ENCODE measurements at regions of chr5 and their contacts with region 1.

Region 1: GRCh38 chr5:127492854-127493738 is 24.3 kb upstream of the PRRC1 start:
- DNase-seq: peak; percentile 26
- ATAC-seq: peak; percentile 75
- H3K4me3 ChIP-seq: no peak overlapping the region
- H3K27ac ChIP-seq: no peak overlapping the region
- H3K4me1 ChIP-seq: no peaks in the 10 kb centered on the region
- H3K27me3 ChIP-seq: no peaks in the 10 kb centered on the region
- CTCF ChIP-seq: peak; percentile 57 to 66 (median 64)
- EP300 ChIP-seq: no peak
- POLR2A ChIP-seq: no peak
- RAD21 ChIP-seq: peak; percentile 22; the same call in 1 of the 2 replicates

Region 2: DNA sequence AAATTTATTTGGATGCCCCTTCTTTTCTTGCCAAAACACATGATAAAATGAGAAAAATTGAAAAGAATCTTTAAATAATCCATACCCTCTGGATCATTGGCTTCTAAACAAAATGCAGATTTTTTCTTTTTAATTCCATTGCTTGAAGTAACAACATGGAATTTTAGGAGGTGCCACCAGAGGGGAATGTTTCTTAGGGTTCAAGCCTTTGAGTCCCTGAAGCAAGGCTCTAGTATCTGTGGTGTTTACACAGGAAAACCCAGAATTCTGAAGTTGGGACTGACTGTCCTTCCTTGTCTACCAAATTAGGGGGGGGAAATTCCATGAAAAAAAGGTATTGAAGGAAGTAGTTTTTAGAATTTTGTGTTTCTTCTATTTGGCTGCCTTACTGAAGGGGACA is 646.8 kb before region 1 on chr5:
- CTCF ChIA-PET with region 1: interaction called, 3 read pairs
- POLR2A ChIA-PET with region 1: no interaction called
- RAD21 ChIA-PET with region 1: no interaction called
- SMC1A ChIA-PET with region 1: no interaction called
- in situ Hi-C with region 1: no loop called
- intact Hi-C with region 1: loop called (anchors 10 kb)
- DNase-seq: no peak
- ATAC-seq: no peak
- H3K4me3 ChIP-seq: no peak overlapping the region
- H3K27ac ChIP-seq: no peak overlapping the region
- H3K4me1 ChIP-seq: no peaks in the 10 kb centered on the region; the same call in 1 of the 2 replicates
- H3K27me3 ChIP-seq: no peaks in the 10 kb centered on the region
- CTCF ChIP-seq: peak in 1 of 3 experiments; percentile 18; a peak in 1 of 6 replicates
- EP300 ChIP-seq: no peak
- POLR2A ChIP-seq: no peak
- RAD21 ChIP-seq: peak; percentile 19; the same call in 1 of the 2 replicates

Region 3: GRCh38 chr5:127290019-127290945 is 202.8 kb before region 1 on chr5 and contains the start of gene MEGF10:
- CTCF ChIA-PET with region 1: interaction called, 6 read pairs
- POLR2A ChIA-PET with region 1: no interaction called
- RAD21 ChIA-PET with region 1: no interaction called
- SMC1A ChIA-PET with region 1: no interaction called
- in situ Hi-C with region 1: no loop called
- intact Hi-C with region 1: loop called (anchors 1 kb)
- DNase-seq: no peak
- ATAC-seq: peak; percentile 77
- H3K4me3 ChIP-seq: no peak within 1 kb of the TSS
- H3K27ac ChIP-seq: no peak within 1 kb of the TSS
- H3K4me1 ChIP-seq: no peaks in the 10 kb centered on the region
- H3K27me3 ChIP-seq: peaks cover 1 to 13% of the 10 kb centered on the region in 2 experiments
- CTCF ChIP-seq: peak; percentile 57 to 62 (median 61)
- EP300 ChIP-seq: no peak
- POLR2A ChIP-seq: no peak
- RAD21 ChIP-seq: peak; percentile 89
- polyA plus RNA-seq, gene MEGF10: not detected

Region 4: DNA sequence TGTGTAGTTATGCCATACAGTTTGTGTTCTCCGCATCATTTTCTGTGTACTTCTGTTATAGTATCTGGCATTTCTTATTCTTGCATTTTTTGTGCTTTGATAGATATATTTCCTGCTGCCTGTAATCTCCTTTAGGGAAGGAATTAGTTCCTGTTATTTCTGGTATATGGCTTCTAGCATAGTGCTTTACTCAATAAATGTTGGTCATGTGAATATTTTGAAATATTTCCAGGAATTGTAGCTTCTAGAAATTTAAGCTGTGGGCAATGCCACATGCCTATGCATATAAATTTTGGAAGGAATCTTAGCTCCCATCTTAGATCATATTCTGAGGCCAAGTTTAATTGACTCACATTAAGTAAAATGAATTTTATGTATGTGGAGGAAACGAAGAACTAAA is 12.8 kb after region 1 on chr5:
- CTCF ChIA-PET with region 1: interaction called, 11 read pairs
- POLR2A ChIA-PET with region 1: no interaction called
- RAD21 ChIA-PET with region 1: no interaction called
- SMC1A ChIA-PET with region 1: interaction called, 5 read pairs
- in situ Hi-C with region 1: no loop called
- intact Hi-C with region 1: no loop called
- DNase-seq: no peak
- ATAC-seq: no peak
- H3K4me3 ChIP-seq: no peak overlapping the region
- H3K27ac ChIP-seq: no peak overlapping the region
- H3K4me1 ChIP-seq: no peaks in the 10 kb centered on the region
- H3K27me3 ChIP-seq: peaks cover 0 to 2% of the 10 kb centered on the region in 2 experiments; a peak in 2 of 4 replicates
- CTCF ChIP-seq: no peak
- EP300 ChIP-seq: no peak
- POLR2A ChIP-seq: no peak
- RAD21 ChIP-seq: no peak

Region 5: DNA sequence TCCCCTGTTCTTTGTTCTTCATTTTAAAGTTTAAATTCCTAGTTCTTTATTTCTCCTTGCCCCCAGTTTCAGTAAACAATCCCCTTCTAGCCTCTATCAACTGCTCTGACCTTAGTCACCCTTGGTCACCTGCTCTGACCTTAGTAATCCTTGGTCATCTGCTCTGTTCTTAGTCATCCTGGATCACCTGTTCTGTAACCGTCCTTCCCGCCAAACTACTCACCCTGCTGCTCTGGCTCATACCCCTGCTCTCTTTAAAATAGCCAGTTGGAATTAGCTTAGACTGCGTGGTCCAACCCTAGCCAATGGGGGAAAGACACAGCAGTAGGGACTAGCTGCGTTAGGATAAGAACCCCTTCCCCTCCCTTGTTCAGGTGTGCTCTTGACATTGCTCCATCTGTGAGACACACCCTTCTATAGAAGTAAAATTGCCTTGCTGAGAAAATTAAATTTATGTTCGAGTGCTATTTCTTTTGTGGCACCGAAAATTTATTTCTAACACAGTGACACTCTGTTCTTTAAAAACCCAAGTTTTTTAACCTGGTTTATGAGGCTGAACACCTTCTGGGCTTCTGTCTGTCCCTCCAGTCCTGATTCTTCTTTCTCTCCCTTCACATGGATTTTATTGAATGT is 28.2 kb after region 1 on chr5:
- CTCF ChIA-PET with region 1: no interaction called
- POLR2A ChIA-PET with region 1: no interaction called
- RAD21 ChIA-PET with region 1: no interaction called
- SMC1A ChIA-PET with region 1: no interaction called
- in situ Hi-C with region 1: no loop called
- intact Hi-C with region 1: no loop called
- DNase-seq: no peak
- ATAC-seq: no peak
- H3K4me3 ChIP-seq: no peak overlapping the region
- H3K27ac ChIP-seq: no peak overlapping the region
- H3K4me1 ChIP-seq: peaks cover 5% of the 10 kb centered on the region; the same call in 1 of the 2 replicates
- H3K27me3 ChIP-seq: no peaks in the 10 kb centered on the region
- CTCF ChIP-seq: no peak
- EP300 ChIP-seq: no peak
- POLR2A ChIP-seq: no peak
- RAD21 ChIP-seq: no peak

Region 6: GRCh38 chr5:127564002-127564769 is 71.1 kb after region 1 on chr5:
- CTCF ChIA-PET with region 1: no interaction called
- POLR2A ChIA-PET with region 1: no interaction called
- RAD21 ChIA-PET with region 1: no interaction called
- SMC1A ChIA-PET with region 1: no interaction called
- in situ Hi-C with region 1: no loop called
- intact Hi-C with region 1: no loop called
- DNase-seq: no peak
- ATAC-seq: peak; percentile 81
- H3K4me3 ChIP-seq: no peak overlapping the region
- H3K27ac ChIP-seq: no peak overlapping the region
- H3K4me1 ChIP-seq: peaks cover 13% of the 10 kb centered on the region
- H3K27me3 ChIP-seq: no peaks in the 10 kb centered on the region
- CTCF ChIP-seq: peak; percentile 67 to 88 (median 70); a peak in 5 of 6 replicates
- EP300 ChIP-seq: 0 out of 4 replicates have a peak, but pooled peaks of 1 of the 2 experiments have one; percentile 14
- POLR2A ChIP-seq: no peak
- RAD21 ChIP-seq: peak; percentile 93

Region 7: DNA sequence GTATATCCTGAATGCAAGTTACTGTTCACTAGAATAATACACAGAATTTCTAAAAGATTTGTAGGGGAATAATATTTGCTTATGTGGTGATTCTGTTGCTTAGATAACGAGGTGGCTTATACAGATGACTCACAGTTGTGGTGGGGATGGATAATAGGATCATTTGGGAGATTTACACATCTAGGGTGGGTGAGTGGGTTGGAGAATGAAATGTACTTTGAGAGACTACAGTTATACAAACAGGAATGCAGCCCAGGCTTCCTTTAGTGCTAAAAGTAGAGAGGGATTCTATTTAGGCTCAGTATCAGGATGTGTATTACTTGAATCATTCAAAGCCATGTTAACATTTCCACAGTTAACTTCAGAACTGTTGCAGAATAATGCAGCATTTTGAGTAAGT is 157.6 kb after region 1 on chr5:
- CTCF ChIA-PET with region 1: no interaction called
- POLR2A ChIA-PET with region 1: no interaction called
- RAD21 ChIA-PET with region 1: no interaction called
- SMC1A ChIA-PET with region 1: no interaction called
- in situ Hi-C with region 1: no loop called
- intact Hi-C with region 1: no loop called
- DNase-seq: no peak
- ATAC-seq: no peak
- H3K4me3 ChIP-seq: no peak overlapping the region
- H3K27ac ChIP-seq: no peak overlapping the region
- H3K4me1 ChIP-seq: no peaks in the 10 kb centered on the region
- H3K27me3 ChIP-seq: no peaks in the 10 kb centered on the region
- CTCF ChIP-seq: no peak
- EP300 ChIP-seq: no peak
- POLR2A ChIP-seq: no peak
- RAD21 ChIP-seq: no peak

Region 8: GRCh38 chr5:128093368-128093767 is 600.3 kb after region 1 on chr5:
- CTCF ChIA-PET with region 1: no interaction called
- POLR2A ChIA-PET with region 1: no interaction called
- RAD21 ChIA-PET with region 1: no interaction called
- SMC1A ChIA-PET with region 1: no interaction called
- in situ Hi-C with region 1: no loop called
- intact Hi-C with region 1: no loop called
- DNase-seq: no peak
- ATAC-seq: no peak
- H3K4me3 ChIP-seq: no peak overlapping the region
- H3K27ac ChIP-seq: no peak overlapping the region
- H3K4me1 ChIP-seq: no peaks in the 10 kb centered on the region
- H3K27me3 ChIP-seq: no peaks in the 10 kb centered on the region
- CTCF ChIP-seq: no peak
- EP300 ChIP-seq: no peak
- POLR2A ChIP-seq: no peak
- RAD21 ChIP-seq: no peak